Activated T-helper 1 cell treated with anti-CD3 and anti-CD28 coated beads, Interleukin-12 subunit alpha, Interleukin-12 subunit beta, Interleukin-2, Interleukin-4 antibody, amounts not matched to agents 30 ng/mL and 10 ng/mL and 1 ng/mL, durations not matched to agents 14 hours and 24 hours and 36 hours (primary cell): ENCODE measurements at regions of chr16 and their contacts with region 1.

Region 1: GRCh38 chr16:25966172-25967097 is 274.7 kb downstream of the HS3ST4 start:
- DNase-seq: peak; percentile 26
- H3K4me3 Mint-ChIP-seq: peak overlapping the region; percentile 49
- H3K27ac Mint-ChIP-seq: peak overlapping the region; percentile 89
- H3K4me1 Mint-ChIP-seq: peaks cover 50% of the 10 kb centered on the region
- H3K27me3 Mint-ChIP-seq: peaks cover 6% of the 10 kb centered on the region

Region 2: DNA sequence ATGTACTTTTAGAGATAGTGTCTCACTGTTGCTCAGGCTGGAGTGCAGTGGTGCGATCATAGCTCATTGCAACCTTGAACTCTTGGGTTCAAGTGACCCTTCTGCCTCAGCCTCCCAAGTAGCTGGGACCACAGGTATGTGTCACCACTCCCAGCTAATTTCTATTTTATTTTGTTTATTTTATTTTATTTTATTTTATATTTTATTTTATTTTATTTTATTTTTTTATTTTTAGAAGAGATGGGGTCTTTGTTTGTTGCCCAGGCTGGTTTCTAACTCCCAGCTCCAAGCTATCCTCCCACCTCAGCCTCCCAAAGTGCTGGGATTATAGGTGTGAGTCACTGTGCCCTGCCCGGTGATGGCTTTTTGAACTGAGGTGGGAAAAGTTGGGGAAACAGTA is 309.8 kb before region 1 on chr16:
- intact Hi-C with region 1: no loop called
- DNase-seq: no peak
- H3K4me3 Mint-ChIP-seq: no peak overlapping the region
- H3K27ac Mint-ChIP-seq: no peak overlapping the region
- H3K4me1 Mint-ChIP-seq: no peaks in the 10 kb centered on the region
- H3K27me3 Mint-ChIP-seq: peaks cover 4% of the 10 kb centered on the region

Region 3: DNA sequence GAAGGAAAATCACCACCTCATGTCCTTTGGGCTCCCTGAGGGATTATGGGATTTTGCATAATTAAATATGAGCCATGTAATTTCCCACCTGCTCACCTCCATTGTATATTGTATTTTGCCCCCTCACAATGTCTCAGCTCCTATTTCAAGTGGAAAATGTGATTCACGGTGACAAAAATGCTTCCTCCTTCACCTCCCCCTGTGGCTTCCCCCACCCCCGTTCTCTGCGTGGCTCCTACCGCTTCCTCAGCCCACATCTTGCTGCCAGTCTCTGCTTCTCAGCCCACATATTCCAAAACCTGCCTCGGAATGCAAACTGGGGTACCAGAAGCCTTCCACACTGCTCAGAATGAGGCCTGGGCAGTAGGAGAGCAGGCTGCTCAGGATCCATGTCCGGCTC is 705.8 kb after region 1 on chr16:
- intact Hi-C with region 1: loop called (anchors 1 kb)
- DNase-seq: no peak
- H3K4me3 Mint-ChIP-seq: peak overlapping the region; percentile 34
- H3K27ac Mint-ChIP-seq: peak overlapping the region; percentile 83
- H3K4me1 Mint-ChIP-seq: peaks cover 43% of the 10 kb centered on the region
- H3K27me3 Mint-ChIP-seq: peaks cover 3% of the 10 kb centered on the region

Region 4: DNA sequence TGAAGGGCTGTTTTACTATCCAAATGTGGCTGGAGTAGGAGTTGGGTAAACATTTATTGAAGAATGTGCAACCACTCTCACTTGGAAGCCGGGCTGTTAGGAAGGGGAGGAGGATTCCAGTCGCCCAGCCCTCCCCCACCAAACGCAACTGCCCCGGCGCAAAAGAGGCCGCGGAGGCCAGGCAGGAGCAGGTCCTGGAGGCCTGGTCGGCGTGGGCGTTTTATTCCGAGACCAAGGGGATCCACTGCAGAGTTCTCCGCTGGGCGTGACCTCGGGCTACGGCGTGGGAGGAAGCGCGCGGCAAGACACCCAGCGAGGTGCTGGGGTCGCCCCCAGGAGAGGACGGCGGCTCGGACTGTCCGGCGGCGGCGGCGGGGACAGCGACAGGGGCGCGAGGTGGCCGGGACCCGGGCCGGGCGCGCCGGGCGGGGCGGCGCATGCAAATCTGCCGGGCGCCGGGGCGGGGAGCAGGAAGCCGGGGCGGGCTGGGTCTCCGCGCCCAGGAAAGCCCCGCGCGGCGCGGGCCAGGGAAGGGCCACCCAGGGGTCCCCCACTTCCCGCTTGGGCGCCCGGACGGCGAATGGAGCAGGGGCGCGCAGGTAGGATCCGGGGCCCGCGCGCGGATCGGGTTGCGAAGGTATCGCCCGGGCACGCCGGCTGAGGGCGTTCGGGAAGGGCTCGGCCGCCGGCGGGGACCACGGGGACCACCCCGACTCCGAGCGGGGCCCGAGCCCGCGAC is 1347.2 kb after region 1 on chr16 and contains the start of gene IL4R:
- intact Hi-C with region 1: loop called (anchors 5 kb)
- DNase-seq: peak; percentile 72
- H3K4me3 Mint-ChIP-seq: peak within 1 kb of the TSS; percentile 94
- H3K27ac Mint-ChIP-seq: peak within 1 kb of the TSS; percentile 99
- H3K4me1 Mint-ChIP-seq: peaks cover 47% of the 10 kb centered on the region
- H3K27me3 Mint-ChIP-seq: peaks cover 2% of the 10 kb centered on the region
- total RNA-seq, gene IL4R: 288 and 320 TPM in 2 replicates